Endothelial cell of umbilical vein (primary cell): ENCODE measurements at regions of chr6 and their contacts with region 1.

Region 1: GRCh38 chr6:88864359-88865054 is 98.9 kb downstream of the RNGTT start:
- DNase-seq: no peak
- H3K4me3 ChIP-seq: no peak overlapping the region
- H3K27ac ChIP-seq: no peak overlapping the region
- H3K4me1 ChIP-seq: peaks cover 23% of the 10 kb centered on the region
- H3K27me3 ChIP-seq: no peaks in the 10 kb centered on the region
- CTCF ChIP-seq: no peak
- POLR2A ChIP-seq: no peak

Region 2: DNA sequence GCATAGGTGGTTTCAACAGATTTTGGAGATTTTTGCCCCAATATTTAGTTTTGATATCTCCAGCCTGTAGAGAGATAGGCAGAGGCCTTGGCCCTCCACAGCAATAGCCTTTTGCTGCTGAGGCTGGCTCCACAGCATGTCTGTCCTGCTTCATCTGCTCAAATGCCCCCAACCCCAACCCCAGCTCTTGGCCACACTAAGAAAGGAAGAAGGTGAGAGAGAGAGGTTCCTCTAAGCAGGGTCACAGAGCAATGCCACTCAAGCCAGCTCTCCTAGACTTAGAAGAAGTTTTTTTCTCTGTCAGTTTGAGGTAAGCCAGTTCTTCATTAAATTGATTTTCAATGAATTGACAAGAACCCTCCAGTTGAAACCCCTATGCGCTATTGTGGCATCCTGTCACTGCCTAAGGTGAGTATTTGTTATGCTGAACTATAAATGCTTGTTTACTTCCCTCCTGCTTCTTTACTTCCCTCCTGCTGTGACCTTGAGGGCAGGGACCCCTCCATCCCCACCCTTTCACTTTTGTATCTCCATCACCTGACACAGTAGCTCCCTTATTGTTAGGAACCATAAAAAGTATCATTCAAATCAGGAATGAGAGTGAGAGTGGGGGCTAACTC is 332.2 kb before region 1 on chr6:
- CTCF ChIA-PET with region 1: no interaction called
- POLR2A ChIA-PET with region 1: no interaction called
- dilution Hi-C with region 1: no loop called
- intact Hi-C with region 1: no loop called
- DNase-seq: no peak
- H3K4me3 ChIP-seq: no peak overlapping the region
- H3K27ac ChIP-seq: no peak overlapping the region
- H3K4me1 ChIP-seq: no peaks in the 10 kb centered on the region
- H3K27me3 ChIP-seq: no peaks in the 10 kb centered on the region
- CTCF ChIP-seq: no peak
- POLR2A ChIP-seq: no peak

Region 3: DNA sequence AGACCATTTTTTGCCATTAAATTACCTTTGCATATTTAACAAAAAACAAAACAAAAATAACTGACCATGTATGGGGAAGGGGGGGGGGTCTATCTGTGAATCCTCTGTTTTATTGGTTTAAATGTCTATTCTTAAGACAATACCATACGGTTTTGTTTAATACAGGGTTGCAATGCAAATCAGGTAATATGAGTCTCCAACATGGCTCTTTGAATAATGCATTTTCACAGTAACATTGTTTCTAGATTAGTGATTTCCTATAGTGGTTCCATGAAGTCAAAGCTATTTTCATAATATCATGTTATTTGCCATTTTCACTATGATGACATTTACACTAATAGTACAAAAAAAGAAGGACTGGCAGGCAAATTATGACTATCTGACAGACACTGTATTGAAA is 838.8 kb after region 1 on chr6:
- CTCF ChIA-PET with region 1: no interaction called
- POLR2A ChIA-PET with region 1: no interaction called
- dilution Hi-C with region 1: no loop called
- intact Hi-C with region 1: loop called (anchors 5 kb)
- DNase-seq: no peak
- H3K4me3 ChIP-seq: no peak overlapping the region
- H3K27ac ChIP-seq: no peak overlapping the region
- H3K4me1 ChIP-seq: no peaks in the 10 kb centered on the region
- H3K27me3 ChIP-seq: no peaks in the 10 kb centered on the region
- CTCF ChIP-seq: no peak
- POLR2A ChIP-seq: no peak